Transverse colon (tissue), 4 donors: ENCODE measurements at regions of chr6 and their contacts with region 1.

Region 1: DNA sequence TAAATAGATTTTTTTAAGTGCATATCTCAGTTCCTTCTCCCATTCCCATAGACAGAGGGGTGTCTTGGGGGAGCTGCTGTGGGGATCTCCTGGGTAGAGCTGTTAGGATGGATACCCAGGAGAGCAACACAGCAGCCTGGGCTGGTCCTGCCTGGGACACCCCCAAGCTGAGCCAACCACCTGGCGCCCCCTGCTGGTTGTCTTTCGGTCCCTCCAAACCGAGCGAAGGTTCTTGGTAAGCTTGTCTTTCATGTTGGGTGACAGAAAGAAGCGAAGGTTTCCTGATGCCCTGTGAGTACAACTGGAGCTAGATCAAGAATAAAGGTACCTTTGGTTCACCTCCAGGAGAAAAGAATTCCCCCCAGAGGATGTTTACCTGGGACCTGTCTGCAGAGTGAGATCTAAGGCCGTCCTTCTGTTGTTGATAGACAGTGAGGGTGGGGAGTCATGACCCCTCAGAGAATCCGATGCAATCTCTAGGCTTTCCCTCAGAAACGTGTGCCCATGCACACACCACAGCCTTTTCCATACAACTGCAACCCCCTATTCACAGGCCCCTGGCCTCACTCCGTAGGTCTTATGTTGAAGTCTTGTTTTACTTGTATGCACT is 50.8 kb downstream of the SNX9 start:
- DNase-seq: peak; percentile 88
- H3K4me3 ChIP-seq: no peak overlapping the region
- H3K27ac ChIP-seq: no peak overlapping the region
- H3K4me1 ChIP-seq: no peaks in the 10 kb centered on the region
- H3K27me3 ChIP-seq: no peaks in the 10 kb centered on the region
- CTCF ChIP-seq: peak; percentile 78 to 85 (median 79)
- EP300 ChIP-seq: no peak
- POLR2A ChIP-seq: no peak

Region 2: GRCh38 chr6:157823001-157823527 is 50.8 kb before region 1 on chr6 and contains the start of gene SNX9:
- in situ Hi-C with region 1: no loop called
- intact Hi-C with region 1: loop called (anchors 5 kb)
- DNase-seq: peak; percentile 83
- H3K4me3 ChIP-seq: peak within 1 kb of the TSS; percentile 52 to 100 (median 98)
- H3K27ac ChIP-seq: peak within 1 kb of the TSS; percentile 92 to 99 (median 98)
- H3K4me1 ChIP-seq: peaks cover 0 to 29% (median 19%) of the 10 kb centered on the region in 4 donors
- H3K27me3 ChIP-seq: no peaks in the 10 kb centered on the region
- CTCF ChIP-seq: no peak
- EP300 ChIP-seq: no peak
- POLR2A ChIP-seq: peak; percentile 35
- total RNA-seq, gene SNX9: 13.7 to 57.2 (median 50.7) TPM